ENCODE measurements at regions of chr22 and their contacts with region 1.

Region 1: DNA sequence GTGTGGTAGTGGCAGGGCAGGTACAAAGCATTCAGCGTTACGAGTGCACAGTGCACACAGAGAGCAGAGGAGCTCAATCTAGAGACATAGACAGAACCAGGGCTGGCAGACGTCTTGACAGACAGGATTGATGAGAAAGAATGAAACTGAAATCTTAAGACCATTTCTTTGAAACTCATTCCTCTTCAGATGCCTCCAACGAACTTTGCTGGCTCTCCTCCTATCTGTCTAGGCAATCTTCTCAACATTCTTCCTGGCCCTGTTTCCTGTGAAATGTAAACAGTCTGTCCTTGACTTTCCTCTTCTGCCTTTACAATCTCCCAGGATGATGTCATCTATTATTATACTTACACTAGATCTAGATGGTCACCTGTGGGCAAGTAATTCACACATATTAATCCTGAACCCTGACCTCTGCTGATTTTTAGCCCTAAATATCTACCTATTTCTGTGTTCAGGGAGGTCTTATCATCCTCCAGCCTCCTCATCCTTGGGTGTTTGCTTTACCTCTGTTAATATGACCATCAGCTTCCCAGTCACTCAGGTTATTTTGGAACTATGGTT is 119.5 kb downstream of the ENTHD1 start:
- DNase-seq: peak in 4 of 9 experiments; percentile 7 to 33 (median 12)
- ATAC-seq: peak; percentile 44
- H3K4me3 ChIP-seq: no peak overlapping the region
- H3K4me3 Mint-ChIP-seq: peak overlapping the region; percentile 15
- H3K27ac ChIP-seq: no peak overlapping the region
- H3K27ac Mint-ChIP-seq: peak overlapping the region; percentile 4
- H3K4me1 ChIP-seq: peaks cover 8% of the 10 kb centered on the region
- H3K4me1 Mint-ChIP-seq: peaks cover 20% of the 10 kb centered on the region
- H3K27me3 ChIP-seq: no peaks in the 10 kb centered on the region
- H3K27me3 Mint-ChIP-seq: no peaks in the 10 kb centered on the region
- CTCF ChIP-seq: no peak

Region 2: GRCh38 chr22:39598017-39598965 is 175.8 kb before region 1 on chr22:
- CTCF ChIA-PET with region 1: no interaction called
- POLR2A ChIA-PET with region 1: no interaction called
- intact Hi-C with region 1: no loop called
- DNase-seq: peak; percentile 30 to 77 (median 71)
- ATAC-seq: peak; percentile 90
- H3K4me3 ChIP-seq: peak overlapping the region in 1 of 2 experiments; percentile 15
- H3K4me3 Mint-ChIP-seq: peak overlapping the region; percentile 35
- H3K27ac ChIP-seq: no peak overlapping the region
- H3K27ac Mint-ChIP-seq: no peak overlapping the region
- H3K4me1 ChIP-seq: peaks cover 33% of the 10 kb centered on the region
- H3K4me1 Mint-ChIP-seq: peaks cover 31% of the 10 kb centered on the region
- H3K27me3 ChIP-seq: peaks cover 0 to 2% of the 10 kb centered on the region in 2 experiments
- H3K27me3 Mint-ChIP-seq: peaks cover 18% of the 10 kb centered on the region
- CTCF ChIP-seq: no peak

Region 3: GRCh38 chr22:39785232-39785631 is 11.2 kb after region 1 on chr22:
- CTCF ChIA-PET with region 1: no interaction called
- POLR2A ChIA-PET with region 1: no interaction called
- intact Hi-C with region 1: no loop called
- DNase-seq: no peak
- ATAC-seq: no peak
- H3K4me3 ChIP-seq: no peak overlapping the region
- H3K4me3 Mint-ChIP-seq: no peak overlapping the region
- H3K27ac ChIP-seq: no peak overlapping the region
- H3K27ac Mint-ChIP-seq: no peak overlapping the region
- H3K4me1 ChIP-seq: no peaks in the 10 kb centered on the region
- H3K4me1 Mint-ChIP-seq: peaks cover 7% of the 10 kb centered on the region
- H3K27me3 ChIP-seq: no peaks in the 10 kb centered on the region
- H3K27me3 Mint-ChIP-seq: no peaks in the 10 kb centered on the region
- CTCF ChIP-seq: no peak

Region 4: DNA sequence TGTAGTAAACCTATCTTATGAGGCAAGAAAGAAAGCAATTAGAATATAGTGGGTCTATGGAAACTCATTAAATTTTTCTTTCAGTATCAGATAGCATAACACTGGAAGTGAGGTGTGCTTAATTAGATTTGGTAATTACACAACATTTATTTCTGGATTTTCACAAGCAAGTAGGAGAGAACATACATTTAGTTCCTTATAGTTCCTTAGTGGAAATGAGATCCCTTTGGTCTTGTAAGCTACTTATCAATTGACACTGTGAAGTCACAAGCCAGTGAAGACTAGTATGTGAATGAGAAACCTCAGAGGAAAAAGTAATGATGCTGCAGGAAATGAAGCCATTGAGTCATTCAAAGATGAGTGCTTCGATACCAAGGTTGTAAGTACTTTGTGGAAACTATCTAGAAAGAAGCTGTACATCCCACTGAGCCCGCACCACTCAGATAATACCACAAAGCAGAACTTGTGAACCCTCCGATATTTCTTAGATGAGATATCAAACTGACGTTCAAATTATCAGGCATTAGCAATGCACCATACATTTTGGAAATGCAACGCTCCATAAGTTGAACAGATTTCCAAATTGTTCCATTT is 66.0 kb after region 1 on chr22:
- CTCF ChIA-PET with region 1: no interaction called
- POLR2A ChIA-PET with region 1: no interaction called
- intact Hi-C with region 1: loop called in 1 of 2 experiments (anchors 10 kb)
- DNase-seq: peak in 4 of 9 experiments; percentile 12 to 33 (median 22)
- ATAC-seq: peak; percentile 62
- H3K4me3 ChIP-seq: no peak overlapping the region
- H3K4me3 Mint-ChIP-seq: no peak overlapping the region
- H3K27ac ChIP-seq: no peak overlapping the region
- H3K27ac Mint-ChIP-seq: no peak overlapping the region
- H3K4me1 ChIP-seq: no peaks in the 10 kb centered on the region
- H3K4me1 Mint-ChIP-seq: peaks cover 12% of the 10 kb centered on the region
- H3K27me3 ChIP-seq: no peaks in the 10 kb centered on the region
- H3K27me3 Mint-ChIP-seq: no peaks in the 10 kb centered on the region
- CTCF ChIP-seq: no peak

Region 5: GRCh38 chr22:40782518-40782917 is 1008.5 kb after region 1 on chr22:
- CTCF ChIA-PET with region 1: no interaction called
- POLR2A ChIA-PET with region 1: no interaction called
- intact Hi-C with region 1: loop called in 1 of 2 experiments (anchors 5 kb)
- DNase-seq: no peak
- ATAC-seq: no peak
- H3K4me3 ChIP-seq: no peak overlapping the region
- H3K4me3 Mint-ChIP-seq: no peak overlapping the region
- H3K27ac ChIP-seq: no peak overlapping the region
- H3K27ac Mint-ChIP-seq: no peak overlapping the region
- H3K4me1 ChIP-seq: no peaks in the 10 kb centered on the region
- H3K4me1 Mint-ChIP-seq: no peaks in the 10 kb centered on the region
- H3K27me3 ChIP-seq: no peaks in the 10 kb centered on the region
- H3K27me3 Mint-ChIP-seq: no peaks in the 10 kb centered on the region
- CTCF ChIP-seq: no peak